Ascending aorta (tissue), 2 donors: ENCODE measurements at regions of chr20 and their contacts with region 1.

Region 1: DNA sequence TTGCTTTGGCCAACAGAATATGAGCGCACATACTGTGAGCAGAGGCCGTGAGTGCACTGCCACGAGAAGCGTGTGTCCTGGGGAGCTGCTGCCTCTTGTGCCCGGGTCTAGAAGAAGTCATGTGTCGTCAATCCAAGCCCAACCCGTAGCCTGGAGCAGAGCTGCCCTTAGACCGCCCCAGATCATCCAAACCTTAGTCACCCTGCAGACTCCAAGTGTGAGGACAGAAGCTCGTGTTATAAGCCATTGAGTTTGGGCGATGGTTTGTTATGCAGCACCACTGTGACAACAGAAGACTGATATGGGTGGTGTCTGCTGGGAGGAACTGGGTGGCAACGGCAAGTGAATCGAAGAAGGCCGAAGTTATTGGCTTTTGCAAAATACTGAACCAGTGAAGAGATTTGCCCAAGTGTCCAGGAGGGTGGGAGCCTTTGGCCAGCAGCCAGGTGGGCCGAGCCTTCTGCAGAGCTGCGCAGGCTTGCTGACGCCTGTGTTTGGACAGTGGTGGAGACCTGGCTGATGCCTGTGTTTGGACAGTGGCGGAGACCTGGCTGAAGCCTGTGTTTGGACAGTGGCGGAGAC is 101.3 kb upstream of the SULF2 start:
- DNase-seq: no peak
- H3K4me3 ChIP-seq: no peak overlapping the region
- H3K27ac ChIP-seq: no peak overlapping the region
- H3K4me1 ChIP-seq: no peaks in the 10 kb centered on the region
- H3K27me3 ChIP-seq: no peaks in the 10 kb centered on the region
- CTCF ChIP-seq: no peak

Region 2: DNA sequence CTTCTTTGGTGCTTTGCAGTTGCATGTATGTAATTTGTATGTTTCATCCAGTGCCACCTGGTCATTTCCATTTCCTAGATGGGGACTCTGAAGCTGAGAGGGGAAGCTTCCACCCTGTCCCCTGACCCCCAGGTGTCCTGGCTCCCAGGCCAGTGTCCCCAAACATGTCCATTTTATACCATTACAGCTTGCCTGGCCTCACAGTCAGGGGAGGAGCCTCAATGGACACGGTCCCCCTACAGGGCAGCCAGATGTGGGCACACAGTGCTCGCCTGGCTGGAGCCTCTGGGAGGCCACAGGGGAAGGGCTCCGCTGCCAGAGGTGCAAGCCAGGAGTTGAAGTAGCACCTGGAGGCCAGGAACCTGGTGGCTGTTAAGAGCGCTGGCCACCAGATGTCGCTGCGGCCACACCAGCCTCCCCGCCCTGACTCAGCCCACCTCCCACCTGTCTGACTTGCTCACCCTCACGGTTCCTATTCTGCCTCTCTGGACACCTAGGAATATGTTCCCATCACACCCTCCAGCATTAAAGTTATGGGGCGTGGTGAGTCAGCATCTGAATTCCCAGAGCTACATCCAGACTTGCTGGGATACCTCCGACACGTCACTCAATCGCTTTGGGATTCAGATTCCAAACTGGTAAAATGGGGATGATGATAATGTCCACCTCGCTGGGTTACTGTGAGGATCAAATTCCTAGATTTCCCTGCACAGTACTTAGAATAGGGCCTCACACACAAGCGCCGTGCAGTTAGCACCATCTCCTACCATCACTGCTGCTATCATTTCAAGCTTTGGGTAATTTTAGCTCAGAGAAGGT is 208.7 kb before region 1 on chr20:
- intact Hi-C with region 1: no loop called
- DNase-seq: no peak
- H3K4me3 ChIP-seq: no peak overlapping the region
- H3K27ac ChIP-seq: no peak overlapping the region
- H3K4me1 ChIP-seq: no peaks in the 10 kb centered on the region
- H3K27me3 ChIP-seq: no peaks in the 10 kb centered on the region
- CTCF ChIP-seq: peak; percentile 55 to 74 (median 66)

Region 3: DNA sequence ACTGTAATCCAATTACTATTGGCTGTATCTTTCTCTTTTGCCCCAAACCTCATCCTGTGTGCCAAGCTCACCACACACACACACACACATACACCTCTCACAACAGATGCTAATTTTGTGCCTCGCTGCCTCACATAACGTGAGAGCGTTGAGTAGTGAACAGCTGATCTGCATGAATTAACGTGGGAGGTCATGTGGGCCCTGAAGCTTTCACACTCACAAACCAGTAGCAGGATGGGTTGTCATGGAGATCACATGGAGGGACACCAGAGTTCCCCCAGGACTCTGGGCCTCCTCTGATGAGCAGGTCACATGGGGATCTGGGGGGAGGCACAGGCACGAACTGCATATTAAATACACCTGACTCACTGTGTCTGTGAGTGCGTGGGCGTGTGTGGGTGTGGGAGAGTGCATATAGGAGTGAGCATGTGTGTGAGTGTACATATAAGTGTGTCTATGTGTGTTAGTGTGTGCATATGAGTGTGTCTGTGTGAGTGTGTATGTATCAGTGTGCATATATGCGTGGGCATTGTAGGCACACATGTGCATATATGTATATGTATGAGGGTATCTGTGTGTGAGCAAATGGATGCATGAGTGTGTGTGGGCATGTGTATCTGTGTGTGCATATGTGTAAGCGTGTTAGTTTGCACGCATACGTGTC is 38.6 kb before region 1 on chr20:
- intact Hi-C with region 1: loop called (anchors 10 kb)
- DNase-seq: no peak
- H3K4me3 ChIP-seq: no peak overlapping the region
- H3K27ac ChIP-seq: no peak overlapping the region
- H3K4me1 ChIP-seq: no peaks in the 10 kb centered on the region
- H3K27me3 ChIP-seq: no peaks in the 10 kb centered on the region
- CTCF ChIP-seq: no peak

Region 4: DNA sequence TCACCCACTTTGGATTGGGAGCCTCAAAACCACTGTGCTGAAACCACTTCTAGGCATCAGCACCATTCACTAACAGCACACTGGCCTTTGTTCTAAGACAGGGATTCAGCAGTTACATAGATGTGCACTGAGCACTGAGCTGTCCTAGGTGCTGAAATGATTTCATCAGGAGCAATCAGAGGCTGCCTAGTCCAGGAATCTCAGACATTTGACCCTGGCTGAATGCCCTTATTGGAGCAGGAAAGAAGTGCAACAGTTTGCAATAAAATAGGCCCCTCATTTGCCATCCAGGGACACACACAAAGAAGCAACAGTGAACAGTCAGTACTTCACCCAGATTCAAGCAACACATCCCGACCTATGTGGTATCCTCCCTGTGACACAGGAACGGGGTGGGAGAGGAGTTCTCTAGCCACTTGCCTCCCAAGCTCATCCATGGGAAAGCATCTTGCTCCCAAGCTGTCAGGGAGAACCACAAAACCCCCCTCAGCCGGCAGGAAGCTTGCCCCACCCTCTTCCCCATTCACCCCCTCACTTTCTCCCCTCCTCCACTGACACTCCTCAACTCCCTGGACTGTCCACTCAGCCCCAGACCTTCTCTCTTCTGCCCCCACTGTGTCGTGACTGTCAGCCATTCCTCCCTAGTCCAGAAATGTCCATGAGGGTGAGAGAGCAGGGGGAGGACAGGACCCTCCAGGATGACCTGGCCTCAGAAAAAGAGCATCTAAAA is 636.8 kb after region 1 on chr20:
- intact Hi-C with region 1: loop called (anchors 5 kb)
- DNase-seq: no peak
- H3K4me3 ChIP-seq: no peak overlapping the region
- H3K27ac ChIP-seq: no peak overlapping the region
- H3K4me1 ChIP-seq: no peaks in the 10 kb centered on the region
- H3K27me3 ChIP-seq: no peaks in the 10 kb centered on the region
- CTCF ChIP-seq: no peak